GM10248 (cell line): ENCODE measurements at regions of chr1 and their contacts with region 1.

Region 1: DNA sequence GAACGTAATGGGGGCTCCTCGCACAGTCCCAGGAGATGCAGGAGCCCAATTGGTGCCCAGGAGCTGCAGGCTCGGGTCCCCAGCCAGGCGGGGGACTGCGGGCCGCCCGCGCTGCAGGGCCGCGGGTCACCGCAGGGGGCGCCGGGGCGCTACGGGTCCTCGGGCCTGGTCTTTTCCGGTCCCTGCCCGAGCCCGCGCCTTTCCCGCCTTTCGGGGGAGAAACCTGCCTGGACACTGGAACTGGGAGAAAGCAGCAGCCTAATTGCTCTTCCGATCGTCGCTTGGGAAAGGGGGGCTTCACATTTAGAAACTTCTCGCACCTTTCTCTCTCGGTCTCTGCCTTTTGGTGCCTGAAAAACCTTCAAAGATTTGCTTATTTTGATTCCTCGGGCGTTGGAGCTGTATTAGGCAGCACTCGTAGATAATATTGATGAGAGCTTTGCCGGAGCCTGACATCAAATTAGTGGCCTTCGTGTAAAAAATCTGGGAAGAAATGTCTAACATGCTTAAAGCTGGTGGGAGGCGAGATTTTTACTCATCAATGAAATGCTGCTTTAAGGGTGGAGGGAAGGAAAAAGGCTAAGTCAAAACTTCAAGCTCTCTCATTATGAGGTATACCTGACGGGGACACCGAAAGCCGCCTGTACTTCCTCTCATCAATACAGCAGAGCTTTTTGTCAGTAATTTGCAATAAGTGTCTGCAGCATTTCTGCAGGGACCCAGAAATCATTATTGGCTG is 12.6 kb upstream of the BARHL2 start:
- DNase-seq: no peak
- CTCF ChIP-seq: peak; percentile 36

Region 2: GRCh38 chr1:90710579-90711536 is 18.8 kb before region 1 on chr1:
- CTCF ChIA-PET with region 1: interaction called, 14 read pairs
- POLR2A ChIA-PET with region 1: no interaction called
- DNase-seq: no peak
- CTCF ChIP-seq: no peak